Sigmoid colon (tissue), 7 donors: ENCODE measurements at regions of chr9 and their contacts with region 1.

Region 1: DNA sequence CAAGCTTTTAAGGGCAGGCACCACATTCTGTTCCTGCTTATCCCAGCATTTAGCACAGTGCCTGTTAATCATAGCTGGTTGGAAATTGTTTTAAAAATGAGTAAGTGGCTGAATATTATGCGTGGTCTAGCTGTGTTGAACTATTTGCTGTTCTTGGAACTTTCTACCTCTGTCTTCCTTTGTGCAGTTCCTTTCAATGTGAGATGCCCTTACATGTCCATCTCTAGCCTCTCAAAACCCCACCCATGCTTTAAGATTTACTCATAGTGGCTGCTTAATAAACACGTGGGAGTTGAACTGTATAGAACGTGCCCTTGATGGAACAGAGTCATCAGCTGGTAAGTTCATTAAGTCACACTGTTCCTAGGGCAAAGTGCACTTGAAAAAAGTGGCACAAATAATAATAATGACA is 34.5 kb downstream of the C9orf57 start:
- DNase-seq: no peak
- H3K4me3 ChIP-seq: no peak overlapping the region
- H3K27ac ChIP-seq: no peak overlapping the region
- H3K4me1 ChIP-seq: peaks cover 0 to 4% (median 0%) of the 10 kb centered on the region in 4 donors
- H3K27me3 ChIP-seq: no peaks in the 10 kb centered on the region
- CTCF ChIP-seq: no peak
- EP300 ChIP-seq: no peak
- POLR2A ChIP-seq: no peak

Region 2: DNA sequence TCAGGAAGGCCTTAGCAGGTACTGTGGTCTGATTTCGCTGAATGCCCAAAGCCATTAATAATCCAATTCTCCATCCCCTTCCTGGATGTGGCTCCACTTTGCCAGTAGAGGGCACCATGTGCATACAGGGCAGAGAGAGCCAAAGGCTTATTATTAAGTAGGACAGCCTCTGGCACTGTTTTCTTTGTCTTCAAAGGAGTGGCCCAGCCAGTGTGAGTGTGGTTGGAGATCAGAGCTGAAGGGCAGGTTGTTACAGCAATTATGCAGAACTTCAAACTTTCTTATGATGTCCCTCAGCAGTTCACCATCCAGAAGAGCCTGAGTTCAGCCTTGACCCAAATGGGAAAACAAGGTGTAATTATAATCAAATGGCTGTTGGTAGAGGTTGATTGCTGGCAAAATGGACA is 219.0 kb before region 1 on chr9:
- intact Hi-C with region 1: loop called (anchors 2 kb)
- DNase-seq: peak; percentile 76
- H3K4me3 ChIP-seq: no peak overlapping the region
- H3K27ac ChIP-seq: no peak overlapping the region
- H3K4me1 ChIP-seq: peaks cover 0 to 4% (median 0%) of the 10 kb centered on the region in 4 donors
- H3K27me3 ChIP-seq: no peaks in the 10 kb centered on the region
- CTCF ChIP-seq: peak; percentile 28 to 81 (median 61)
- EP300 ChIP-seq: no peak
- POLR2A ChIP-seq: no peak

Region 3: GRCh38 chr9:72113056-72113455 is 87.1 kb after region 1 on chr9:
- intact Hi-C with region 1: no loop called
- DNase-seq: no peak
- H3K4me3 ChIP-seq: no peak overlapping the region
- H3K27ac ChIP-seq: no peak overlapping the region
- H3K4me1 ChIP-seq: no peaks in the 10 kb centered on the region
- H3K27me3 ChIP-seq: no peaks in the 10 kb centered on the region
- CTCF ChIP-seq: no peak
- EP300 ChIP-seq: no peak
- POLR2A ChIP-seq: no peak